ENCODE measurements at regions of chr5 and their contacts with region 1.

Region 1: DNA sequence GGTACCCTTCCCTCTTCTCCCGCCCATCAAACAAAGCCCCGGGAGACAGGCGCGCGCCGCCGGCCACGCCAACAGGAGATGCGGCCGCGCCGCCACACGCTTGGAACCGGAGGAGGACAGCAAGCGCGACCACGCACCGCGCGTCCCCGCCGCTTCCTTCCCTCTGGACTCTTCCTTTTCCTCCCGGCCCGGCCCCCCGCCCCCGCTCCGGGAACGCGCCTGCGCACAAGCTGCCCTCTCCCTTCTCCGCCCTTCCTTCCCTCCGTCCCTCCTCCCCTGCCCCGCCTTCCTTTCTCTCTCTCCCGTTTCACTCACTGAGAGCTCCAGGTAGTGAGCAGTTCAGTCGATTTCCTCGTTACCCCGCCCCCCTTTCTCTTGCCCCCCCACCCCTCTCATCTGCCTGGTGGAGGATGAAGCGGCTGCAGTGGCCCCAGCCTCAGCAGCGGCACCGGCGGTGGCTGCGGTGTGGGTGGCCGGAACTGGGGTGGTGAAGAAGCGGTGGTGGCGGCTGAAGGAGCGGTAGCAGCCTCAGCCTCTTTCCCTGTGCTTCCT is at the start of gene RASA1:
- DNase-seq: peak; percentile 98
- ATAC-seq: peak; percentile 71
- H3K4me3 ChIP-seq: peak within 1 kb of the TSS; percentile 95
- H3K27ac ChIP-seq: peak within 1 kb of the TSS; percentile 79
- H3K4me1 ChIP-seq: peaks cover 14% of the 10 kb centered on the region; the same call in 1 of the 2 replicates
- H3K27me3 ChIP-seq: no peaks in the 10 kb centered on the region
- CTCF ChIP-seq: no peak
- total RNA-seq, gene RASA1: 37.3 and 40.1 TPM in 2 replicates

Region 2: DNA sequence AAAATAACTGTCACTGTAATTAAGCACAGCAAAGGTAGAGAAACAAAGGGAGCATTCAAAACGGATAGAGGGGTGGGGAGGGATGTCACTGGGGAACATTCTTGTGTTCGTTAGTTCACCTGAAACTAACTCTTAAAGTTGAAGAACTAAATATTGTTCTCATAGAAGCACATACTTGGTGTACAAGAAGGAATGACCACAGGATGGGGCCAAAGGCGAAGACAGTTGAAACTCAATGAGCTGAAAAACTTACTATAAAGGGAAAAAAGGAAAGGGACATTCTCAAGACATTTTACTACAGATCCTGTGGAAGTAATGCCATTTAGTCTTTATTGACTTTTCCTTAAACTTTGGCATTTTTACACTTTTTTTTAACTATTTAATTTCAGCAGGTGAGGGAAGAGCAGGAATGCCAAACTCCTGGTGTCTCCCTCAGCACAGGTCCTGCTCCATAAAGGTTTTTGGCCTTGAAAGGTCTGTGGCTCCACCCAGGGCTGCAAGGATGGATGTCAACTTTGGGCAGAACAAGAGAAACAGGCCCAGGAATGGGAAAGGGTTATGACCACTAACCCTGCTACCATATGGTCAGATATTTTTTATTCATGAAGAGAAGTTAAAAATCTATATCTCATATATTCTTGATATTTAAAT is 197.6 kb before region 1 on chr5:
- CTCF ChIA-PET with region 1: interaction called, 3 read pairs
- POLR2A ChIA-PET with region 1: interaction called, 5 read pairs
- intact Hi-C with region 1: loop called (anchors 1 kb)
- DNase-seq: peak; percentile 84
- ATAC-seq: peak; percentile 85
- H3K4me3 ChIP-seq: no peak overlapping the region
- H3K27ac ChIP-seq: no peak overlapping the region
- H3K4me1 ChIP-seq: peaks cover 12% of the 10 kb centered on the region
- H3K27me3 ChIP-seq: no peaks in the 10 kb centered on the region
- CTCF ChIP-seq: peak; percentile 94

Region 3: DNA sequence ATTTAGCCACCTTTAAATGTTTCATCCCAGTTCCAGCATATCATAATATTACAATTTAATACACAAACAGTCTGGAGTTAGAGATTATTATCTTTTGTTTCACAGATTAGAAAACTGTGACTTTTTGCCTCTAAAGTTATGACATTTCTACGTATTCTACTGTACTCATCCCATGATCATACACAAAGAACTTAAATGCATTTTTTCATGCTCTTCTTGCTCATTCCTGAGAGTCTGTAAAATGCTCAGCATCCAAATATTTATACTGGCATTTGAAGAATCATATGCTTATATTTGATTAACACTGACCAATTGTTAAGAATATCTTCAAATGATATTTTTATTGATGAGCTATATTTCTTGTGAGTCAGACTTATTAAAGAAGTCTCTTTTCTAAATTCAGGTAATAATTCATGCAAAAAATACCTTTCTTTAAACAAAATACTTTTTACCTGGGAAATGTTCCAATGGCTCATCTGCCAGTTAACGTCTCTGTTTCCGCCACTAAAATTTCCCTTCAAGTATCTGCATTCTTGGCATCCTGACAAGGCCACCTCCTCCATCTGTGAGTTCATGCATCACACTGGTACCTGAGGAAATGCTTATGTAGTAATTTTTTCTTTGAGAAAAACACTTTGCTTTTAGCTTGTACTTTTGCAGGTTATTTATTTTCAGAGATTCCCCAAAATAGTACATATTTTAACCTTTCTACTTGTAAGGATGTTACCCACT is 139.5 kb before region 1 on chr5:
- CTCF ChIA-PET with region 1: no interaction called
- POLR2A ChIA-PET with region 1: no interaction called
- intact Hi-C with region 1: loop called (anchors 1 kb)
- DNase-seq: peak; percentile 98
- ATAC-seq: peak; percentile 85
- H3K4me3 ChIP-seq: peak overlapping the region; percentile 0; the same call in 1 of the 2 replicates
- H3K27ac ChIP-seq: peak overlapping the region; percentile 59
- H3K4me1 ChIP-seq: peaks cover 41% of the 10 kb centered on the region
- H3K27me3 ChIP-seq: no peaks in the 10 kb centered on the region
- CTCF ChIP-seq: no peak

Region 4: GRCh38 chr5:87195104-87195591 is 72.5 kb before region 1 on chr5:
- CTCF ChIA-PET with region 1: no interaction called
- POLR2A ChIA-PET with region 1: interaction called, 13 read pairs
- intact Hi-C with region 1: loop called (anchors 5 kb)
- DNase-seq: peak; percentile 68
- ATAC-seq: peak; percentile 78
- H3K4me3 ChIP-seq: peak overlapping the region; percentile 3; the same call in 1 of the 2 replicates
- H3K27ac ChIP-seq: peak overlapping the region; percentile 24
- H3K4me1 ChIP-seq: peaks cover 31% of the 10 kb centered on the region
- H3K27me3 ChIP-seq: no peaks in the 10 kb centered on the region
- CTCF ChIP-seq: no peak

Region 5: DNA sequence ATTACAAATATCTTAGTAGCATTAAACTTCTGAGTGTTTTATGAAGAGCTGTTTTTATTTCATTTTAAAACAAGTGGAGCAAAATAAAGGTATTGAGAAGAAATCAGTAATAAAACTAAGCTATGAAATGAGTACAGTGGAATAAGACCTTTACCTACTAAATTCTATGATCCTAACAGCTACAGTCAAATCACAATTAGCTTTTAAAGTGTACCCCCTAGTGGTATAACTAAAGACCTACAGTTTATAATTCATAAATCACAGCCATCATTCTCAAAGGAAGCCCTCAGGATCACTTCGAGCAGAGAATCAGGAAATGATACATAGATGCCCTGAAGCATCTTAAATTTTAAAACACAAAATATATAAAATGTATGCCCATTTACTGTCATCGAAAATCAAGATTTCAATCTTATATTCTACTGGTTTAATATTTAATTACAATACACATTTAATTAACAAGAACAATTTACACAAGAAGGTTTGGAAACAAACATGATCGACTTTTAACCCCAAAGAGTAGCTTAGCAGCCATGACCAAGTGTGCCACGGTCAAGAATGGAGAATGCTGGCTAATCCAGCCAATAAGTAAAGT is 132.8 kb after region 1 on chr5:
- CTCF ChIA-PET with region 1: interaction called, 4 read pairs
- POLR2A ChIA-PET with region 1: no interaction called
- intact Hi-C with region 1: loop called (anchors 2 kb)
- DNase-seq: peak; percentile 78
- ATAC-seq: peak; percentile 85
- H3K4me3 ChIP-seq: no peak overlapping the region
- H3K27ac ChIP-seq: no peak overlapping the region
- H3K4me1 ChIP-seq: peaks cover 7% of the 10 kb centered on the region; the same call in 1 of the 2 replicates
- H3K27me3 ChIP-seq: no peaks in the 10 kb centered on the region
- CTCF ChIP-seq: peak; percentile 94

Measured in PC-3 (cell line).